Naive thymus-derived CD4-positive, alpha-beta T cell (primary cell): ENCODE measurements at regions of chr12 and their contacts with region 1.

Region 1: DNA sequence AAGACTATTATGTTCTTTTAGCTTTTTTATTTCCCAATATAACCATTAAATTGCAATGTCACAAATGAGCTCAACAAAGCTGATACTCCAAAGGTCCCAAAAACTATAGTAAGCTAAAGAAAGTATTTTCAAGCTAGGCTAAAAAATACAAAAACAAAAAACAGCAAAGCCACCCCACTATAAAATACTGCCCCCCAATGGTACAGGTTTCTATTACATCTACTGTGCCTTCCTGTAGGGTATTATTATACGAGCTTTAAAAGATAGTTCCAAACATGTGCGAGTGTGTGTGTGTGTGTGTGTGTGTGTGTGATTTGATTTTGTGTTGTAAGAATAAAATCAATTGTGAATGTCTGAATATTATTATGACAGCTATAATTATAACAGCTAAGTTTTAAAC is 1.1 kb downstream of the IFNG start:
- DNase-seq: peak in 5 of 9 donors; percentile 20 to 48 (median 23)
- ATAC-seq: peak; percentile 77
- H3K4me3 ChIP-seq: peak overlapping the region; percentile 4
- H3K4me3 Mint-ChIP-seq: peak overlapping the region in 2 of 10 donors; percentile 26 to 60
- H3K27ac ChIP-seq: no peak overlapping the region
- H3K27ac Mint-ChIP-seq: no peak overlapping the region
- H3K4me1 ChIP-seq: peaks cover 0 to 37% of the 10 kb centered on the region in 2 donors
- H3K4me1 Mint-ChIP-seq: peaks cover 0 to 30% (median 0%) of the 10 kb centered on the region in 7 donors
- H3K27me3 ChIP-seq: no peaks in the 10 kb centered on the region
- H3K27me3 Mint-ChIP-seq: peaks cover 0 to 3% (median 0%) of the 10 kb centered on the region in 5 donors

Region 2: DNA sequence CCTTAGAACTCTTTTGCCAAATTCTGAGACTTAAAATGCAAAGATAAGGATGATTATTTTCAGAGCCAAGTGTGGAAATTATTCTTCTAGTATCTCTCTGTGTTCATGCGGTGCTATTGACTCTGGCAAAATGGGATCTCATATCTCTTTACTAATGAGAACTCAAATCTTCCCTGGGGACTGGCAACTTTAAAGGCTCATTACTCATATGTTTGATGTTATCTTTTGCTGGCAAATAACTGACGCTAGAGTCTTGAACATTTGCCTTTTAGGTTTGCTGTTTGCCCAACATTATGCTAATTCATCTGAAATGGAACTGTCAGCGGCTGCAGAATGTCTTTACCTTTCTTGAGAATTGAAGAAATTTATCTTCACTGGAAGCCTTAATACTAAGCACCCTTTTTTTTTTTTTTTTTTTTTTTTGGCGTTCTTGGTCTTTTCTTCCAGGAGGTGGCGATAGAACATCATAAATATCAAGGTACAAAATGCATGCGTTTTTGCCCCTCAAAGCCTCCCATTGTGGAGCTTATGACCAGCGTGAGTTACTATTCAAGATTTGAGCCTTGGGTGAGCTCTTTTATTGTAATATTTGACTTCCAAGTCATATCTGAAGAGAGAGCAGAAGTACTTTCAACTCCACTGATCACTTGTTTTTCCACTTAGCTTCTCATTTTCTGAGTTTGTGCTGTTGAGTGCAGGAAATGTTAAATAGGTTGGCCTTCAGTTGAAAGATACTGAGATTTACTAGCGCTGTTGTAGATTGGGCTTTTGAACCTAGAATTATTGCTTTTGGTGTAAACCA is 802.7 kb before region 1 on chr12:
- CTCF ChIA-PET with region 1: interaction called, 4 read pairs
- POLR2A ChIA-PET with region 1: no interaction called
- intact Hi-C with region 1: loop called in 1 of 2 experiments (anchors 10 kb)
- DNase-seq: peak in 7 of 9 donors; percentile 27 to 68 (median 61)
- ATAC-seq: peak; percentile 70
- H3K4me3 ChIP-seq: no peak overlapping the region
- H3K4me3 Mint-ChIP-seq: peak overlapping the region in 7 of 10 donors; percentile 23 to 65 (median 51)
- H3K27ac ChIP-seq: no peak overlapping the region
- H3K27ac Mint-ChIP-seq: peak overlapping the region in 3 of 9 donors; percentile 42 to 63 (median 54)
- H3K4me1 ChIP-seq: peaks cover 0 to 5% of the 10 kb centered on the region in 2 donors
- H3K4me1 Mint-ChIP-seq: peaks cover 2 to 21% (median 16%) of the 10 kb centered on the region in 7 donors
- H3K27me3 ChIP-seq: no peaks in the 10 kb centered on the region
- H3K27me3 Mint-ChIP-seq: no peaks in the 10 kb centered on the region

Region 3: DNA sequence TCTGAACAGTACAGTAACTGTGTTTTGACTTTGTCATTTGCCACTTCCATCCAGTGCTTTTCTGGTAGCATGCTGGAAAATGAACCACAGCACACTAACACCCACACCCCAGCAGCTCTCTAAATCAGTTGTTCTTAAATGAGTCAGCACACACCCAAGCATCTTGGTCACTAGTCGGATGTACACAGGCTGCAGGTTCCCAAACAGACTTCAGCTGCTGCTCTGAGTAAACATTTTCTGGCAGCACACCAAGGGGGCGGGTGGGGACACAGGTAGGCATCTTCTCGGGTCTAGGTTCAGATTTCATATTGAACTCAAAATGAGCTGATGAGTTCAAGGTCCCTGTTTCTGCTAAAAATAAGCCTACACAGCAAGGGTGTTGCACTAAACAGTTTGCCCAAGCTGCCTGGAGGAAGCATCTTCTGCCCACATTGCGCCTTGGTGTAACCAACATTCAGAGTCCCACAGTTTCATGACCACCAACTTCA is 38.7 kb before region 1 on chr12:
- CTCF ChIA-PET with region 1: no interaction called
- POLR2A ChIA-PET with region 1: no interaction called
- intact Hi-C with region 1: loop called in 1 of 2 experiments (anchors 2 kb)
- DNase-seq: peak in 1 of 9 donors; percentile 72
- ATAC-seq: peak; percentile 72
- H3K4me3 ChIP-seq: no peak overlapping the region
- H3K4me3 Mint-ChIP-seq: peak overlapping the region in 1 of 10 donors; percentile 63
- H3K27ac ChIP-seq: no peak overlapping the region
- H3K27ac Mint-ChIP-seq: peak overlapping the region in 3 of 9 donors; percentile 3 to 33 (median 9)
- H3K4me1 ChIP-seq: peaks cover 0 to 63% of the 10 kb centered on the region in 2 donors
- H3K4me1 Mint-ChIP-seq: peaks cover 8 to 31% (median 19%) of the 10 kb centered on the region in 7 donors
- H3K27me3 ChIP-seq: no peaks in the 10 kb centered on the region
- H3K27me3 Mint-ChIP-seq: no peaks in the 10 kb centered on the region

Region 4: DNA sequence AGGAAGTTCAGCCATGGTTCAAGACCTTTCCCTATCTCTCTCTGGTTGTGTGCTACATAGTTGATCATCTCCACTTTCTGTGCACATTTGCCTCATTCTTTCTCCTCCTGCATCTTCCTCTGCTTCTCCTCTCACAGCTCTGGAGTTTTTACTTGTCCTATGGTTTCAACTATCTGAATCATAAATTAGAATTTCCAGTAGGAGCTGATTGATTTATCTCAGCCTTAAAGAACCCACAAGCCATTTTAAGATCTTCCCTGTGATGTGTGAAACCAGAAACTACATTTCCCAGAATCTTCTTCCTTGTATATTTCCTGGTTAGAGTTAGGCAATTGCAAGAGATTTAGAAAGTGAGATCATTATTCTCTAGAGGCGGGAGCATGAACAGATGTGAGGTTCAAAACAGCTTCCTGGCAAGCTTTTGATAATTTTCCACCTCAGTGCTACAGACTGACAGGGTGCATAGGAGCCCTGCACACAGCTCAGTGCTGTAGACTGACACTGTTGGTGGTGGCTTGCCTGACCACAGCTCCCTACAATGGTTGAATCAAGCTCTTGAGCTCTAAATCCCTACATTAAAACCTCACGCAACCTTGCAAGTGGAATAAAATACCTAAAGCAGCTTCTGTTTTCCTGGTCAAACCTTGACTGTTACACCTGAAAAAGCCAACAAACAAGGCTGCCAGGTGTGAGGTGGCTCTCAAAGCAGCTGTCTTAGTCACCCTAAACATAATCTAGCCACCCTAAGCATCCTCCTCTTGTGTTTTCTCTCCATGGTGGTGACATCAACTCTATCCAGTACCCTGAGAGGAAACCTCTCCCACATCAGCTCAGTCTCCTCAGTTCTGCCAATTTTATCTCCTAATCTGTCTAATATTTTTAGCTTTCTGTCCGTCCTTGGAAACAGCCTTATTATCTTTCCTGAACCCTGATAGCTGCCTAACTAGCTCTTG is 22.6 kb after region 1 on chr12:
- CTCF ChIA-PET with region 1: interaction called, 6 read pairs
- POLR2A ChIA-PET with region 1: interaction called, 3 read pairs
- intact Hi-C with region 1: loop called in 1 of 2 experiments (anchors 2 kb)
- DNase-seq: peak in 8 of 9 donors; percentile 43 to 77 (median 68)
- ATAC-seq: peak; percentile 92
- H3K4me3 ChIP-seq: peak overlapping the region; percentile 5
- H3K4me3 Mint-ChIP-seq: peak overlapping the region; percentile 3 to 69 (median 60)
- H3K27ac ChIP-seq: peak overlapping the region; percentile 64
- H3K27ac Mint-ChIP-seq: peak overlapping the region; percentile 75 to 94 (median 88)
- H3K4me1 ChIP-seq: peaks cover 33 to 53% of the 10 kb centered on the region in 2 donors
- H3K4me1 Mint-ChIP-seq: peaks cover 33 to 60% (median 55%) of the 10 kb centered on the region in 7 donors
- H3K27me3 ChIP-seq: no peaks in the 10 kb centered on the region
- H3K27me3 Mint-ChIP-seq: peaks cover 0 to 3% (median 0%) of the 10 kb centered on the region in 5 donors

Region 5: GRCh38 chr12:68317047-68317667 is 158.7 kb after region 1 on chr12:
- CTCF ChIA-PET with region 1: interaction called, 10 read pairs
- POLR2A ChIA-PET with region 1: no interaction called
- intact Hi-C with region 1: loop called in 1 of 2 experiments (anchors 5 kb)
- DNase-seq: peak in 7 of 9 donors; percentile 13 to 63 (median 50)
- ATAC-seq: no peak
- H3K4me3 ChIP-seq: no peak overlapping the region
- H3K4me3 Mint-ChIP-seq: no peak overlapping the region
- H3K27ac ChIP-seq: no peak overlapping the region
- H3K27ac Mint-ChIP-seq: no peak overlapping the region
- H3K4me1 ChIP-seq: no peaks in the 10 kb centered on the region
- H3K4me1 Mint-ChIP-seq: peaks cover 0 to 5% (median 0%) of the 10 kb centered on the region in 7 donors
- H3K27me3 ChIP-seq: no peaks in the 10 kb centered on the region
- H3K27me3 Mint-ChIP-seq: no peaks in the 10 kb centered on the region

Region 6: GRCh38 chr12:68981516-68981915 is 823.1 kb after region 1 on chr12:
- CTCF ChIA-PET with region 1: no interaction called
- POLR2A ChIA-PET with region 1: no interaction called
- intact Hi-C with region 1: no loop called
- DNase-seq: no peak
- ATAC-seq: no peak
- H3K4me3 ChIP-seq: no peak overlapping the region
- H3K4me3 Mint-ChIP-seq: no peak overlapping the region
- H3K27ac ChIP-seq: no peak overlapping the region
- H3K27ac Mint-ChIP-seq: no peak overlapping the region
- H3K4me1 ChIP-seq: no peaks in the 10 kb centered on the region
- H3K4me1 Mint-ChIP-seq: peaks cover 0 to 4% (median 0%) of the 10 kb centered on the region in 7 donors
- H3K27me3 ChIP-seq: no peaks in the 10 kb centered on the region
- H3K27me3 Mint-ChIP-seq: peaks cover 0 to 14% (median 5%) of the 10 kb centered on the region in 5 donors